Heart left ventricle (tissue), 16 donors: ENCODE measurements at regions of chr1 and their contacts with region 1.

Region 1: DNA sequence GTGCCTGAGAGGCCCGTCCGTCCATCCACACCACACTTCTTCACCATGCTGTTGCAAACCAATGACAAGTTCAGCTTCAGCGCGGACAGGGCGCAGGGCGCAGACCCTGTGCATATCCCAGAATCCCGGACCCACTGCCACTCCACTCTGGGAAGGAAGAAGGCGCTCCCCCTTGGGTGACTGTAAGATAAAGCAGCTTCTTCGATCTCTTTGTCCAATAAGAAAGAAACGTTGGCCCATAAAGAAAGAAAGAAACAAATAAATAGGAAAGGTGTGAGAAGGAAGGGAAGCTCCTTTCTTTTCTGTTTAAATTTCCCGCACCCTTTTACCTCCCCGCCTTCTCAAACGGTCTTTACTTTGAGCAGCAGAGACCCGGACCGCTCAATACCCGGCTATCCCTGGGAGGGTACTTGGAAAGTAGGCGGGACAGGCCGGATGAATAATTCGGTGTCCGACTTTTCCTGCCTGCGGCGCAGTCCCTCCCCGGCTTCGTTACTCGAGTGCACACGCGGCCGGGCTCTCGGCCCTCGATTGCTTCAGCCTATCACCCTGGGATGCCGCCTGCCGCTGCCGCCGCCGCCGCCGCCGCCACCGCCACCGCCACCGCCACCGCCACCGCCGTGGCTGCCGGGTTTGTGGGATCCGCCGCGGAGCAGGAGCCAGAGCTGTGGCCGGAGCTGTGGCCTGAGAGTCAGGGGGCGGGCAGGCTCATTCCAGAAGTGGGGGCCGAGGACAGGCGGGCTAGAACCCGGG is 523 bp upstream of the RASAL2 start:
- DNase-seq: peak; percentile 94 to 96 (median 96)
- ATAC-seq: peak; percentile 84 to 93 (median 92)
- H3K4me3 ChIP-seq: peak overlapping the region; percentile 71 to 98 (median 92)
- H3K27ac ChIP-seq: peak overlapping the region; percentile 82 to 96 (median 94)
- H3K4me1 ChIP-seq: peaks cover 2 to 45% (median 29%) of the 10 kb centered on the region in 12 donors
- H3K27me3 ChIP-seq: peaks cover 0 to 4% (median 0%) of the 10 kb centered on the region in 9 donors
- CTCF ChIP-seq: no peak
- POLR2A ChIP-seq: peak in 1 of 2 donors; percentile 28

Region 2: GRCh38 chr1:177928194-177928593 is 165.2 kb before region 1 on chr1:
- intact Hi-C with region 1: no loop called
- DNase-seq: no peak
- ATAC-seq: no peak
- H3K4me3 ChIP-seq: no peak overlapping the region
- H3K27ac ChIP-seq: no peak overlapping the region
- H3K4me1 ChIP-seq: no peaks in the 10 kb centered on the region
- H3K27me3 ChIP-seq: no peaks in the 10 kb centered on the region
- CTCF ChIP-seq: peak in 1 of 12 donors; percentile 8
- POLR2A ChIP-seq: no peak

Region 3: DNA sequence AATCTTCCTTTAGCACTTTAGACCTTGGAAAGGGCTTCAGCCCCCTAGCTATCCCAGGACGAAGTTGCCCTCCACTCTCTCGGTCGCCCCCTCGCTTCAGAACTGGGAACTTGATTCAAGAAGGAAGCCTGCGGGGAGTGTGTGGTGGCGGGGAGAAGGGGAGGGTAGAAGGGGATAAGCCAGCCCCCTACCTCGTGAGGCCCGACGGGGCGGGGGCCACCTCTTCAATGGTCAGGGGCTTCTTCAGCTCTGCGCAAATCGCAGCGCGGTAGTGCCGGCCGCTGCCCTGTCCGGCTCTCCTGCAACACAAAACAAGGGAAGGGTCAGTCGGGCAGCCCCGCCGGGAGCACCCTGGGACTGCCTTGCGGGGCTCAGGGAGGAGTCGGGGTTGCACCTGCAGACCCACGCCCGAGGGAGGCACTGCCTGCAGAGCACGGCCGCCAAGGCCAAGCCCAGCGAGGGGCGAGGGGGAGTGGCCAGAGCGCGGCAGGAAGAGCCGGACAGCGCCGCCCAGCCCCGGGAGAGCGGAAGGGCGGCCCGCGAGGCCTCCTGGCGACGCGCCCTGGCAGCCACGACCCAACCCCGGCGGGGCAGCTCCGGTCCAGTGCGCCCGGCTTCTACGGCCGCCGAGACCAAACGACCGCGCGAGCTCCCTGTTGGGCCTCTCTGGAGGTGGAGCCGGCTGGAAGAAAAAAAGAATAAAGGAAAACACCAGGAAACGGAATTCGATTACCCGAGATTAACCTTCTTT is 55.7 kb before region 1 on chr1:
- intact Hi-C with region 1: loop called in 8 of 10 experiments (anchors 1 to 10 kb)
- DNase-seq: peak; percentile 91 to 95 (median 94)
- ATAC-seq: peak; percentile 89 to 99 (median 98)
- H3K4me3 ChIP-seq: peak overlapping the region; percentile 61 to 97 (median 78)
- H3K27ac ChIP-seq: peak overlapping the region; percentile 61 to 94 (median 86)
- H3K4me1 ChIP-seq: peaks cover 0 to 45% (median 9%) of the 10 kb centered on the region in 12 donors
- H3K27me3 ChIP-seq: no peaks in the 10 kb centered on the region
- CTCF ChIP-seq: peak; percentile 20 to 71 (median 56)
- POLR2A ChIP-seq: peak in 1 of 2 donors; percentile 66

Region 4: DNA sequence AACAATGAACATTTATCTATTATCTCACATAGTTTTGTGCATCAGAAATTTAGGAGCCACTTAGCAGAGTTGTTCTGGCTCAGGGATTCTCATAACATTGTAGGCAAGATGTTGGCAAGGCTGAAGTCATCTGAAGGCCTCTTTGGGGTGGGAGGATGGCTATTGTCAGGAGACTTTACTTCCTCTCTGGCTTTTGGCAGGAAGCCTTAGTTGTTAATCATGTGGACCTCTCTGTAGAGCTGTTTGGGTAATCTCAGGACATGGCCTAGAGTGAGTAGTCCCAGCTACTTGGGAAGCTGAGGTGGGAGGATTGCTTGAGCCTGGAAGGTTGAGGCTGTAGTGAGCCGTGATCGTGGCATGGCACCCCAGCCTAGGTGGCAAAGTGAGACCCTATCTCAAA is 40.7 kb after region 1 on chr1:
- intact Hi-C with region 1: loop called in 2 of 10 experiments (anchors 5 kb)
- DNase-seq: peak in 3 of 5 donors; percentile 36 to 64 (median 56)
- ATAC-seq: peak; percentile 50 to 97 (median 94)
- H3K4me3 ChIP-seq: no peak overlapping the region
- H3K27ac ChIP-seq: peak overlapping the region in 8 of 12 donors; percentile 9 to 80 (median 45)
- H3K4me1 ChIP-seq: peaks cover 3 to 50% (median 31%) of the 10 kb centered on the region in 12 donors
- H3K27me3 ChIP-seq: no peaks in the 10 kb centered on the region
- CTCF ChIP-seq: no peak
- POLR2A ChIP-seq: no peak

Region 5: DNA sequence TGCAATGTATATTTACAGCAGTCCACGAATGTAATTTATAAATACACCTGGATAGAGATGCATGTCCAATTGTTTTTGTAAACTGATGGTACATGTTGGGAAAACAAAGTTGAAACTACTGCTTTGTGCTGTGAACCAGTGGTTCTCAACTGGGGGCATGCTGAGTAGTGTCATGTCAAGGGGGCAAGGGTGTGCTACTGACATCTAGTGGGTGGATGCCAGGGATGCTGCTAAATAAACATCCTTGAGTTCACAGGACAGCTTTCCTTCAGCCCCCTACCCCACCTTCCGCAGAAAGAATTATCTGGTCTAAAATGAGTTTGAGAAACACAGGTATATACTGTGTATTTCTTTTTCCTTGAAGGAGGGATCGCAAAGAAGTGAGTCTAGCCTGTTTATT is 96.4 kb after region 1 on chr1:
- intact Hi-C with region 1: loop called in 4 of 10 experiments (anchors 5 to 10 kb)
- DNase-seq: peak in 3 of 5 donors; percentile 36 to 38 (median 36)
- ATAC-seq: peak in 3 of 4 donors; percentile 78 to 79 (median 78)
- H3K4me3 ChIP-seq: no peak overlapping the region
- H3K27ac ChIP-seq: no peak overlapping the region
- H3K4me1 ChIP-seq: peaks cover 0 to 52% (median 17%) of the 10 kb centered on the region in 12 donors
- H3K27me3 ChIP-seq: no peaks in the 10 kb centered on the region
- CTCF ChIP-seq: peak; percentile 40 to 74 (median 56)
- POLR2A ChIP-seq: no peak

Region 6: GRCh38 chr1:178282949-178283367 is 189.6 kb after region 1 on chr1:
- intact Hi-C with region 1: loop called in 1 of 10 experiments (anchors 5 kb)
- DNase-seq: no peak
- ATAC-seq: peak in 1 of 4 donors; percentile 50
- H3K4me3 ChIP-seq: no peak overlapping the region
- H3K27ac ChIP-seq: no peak overlapping the region
- H3K4me1 ChIP-seq: peaks cover 0 to 54% (median 26%) of the 10 kb centered on the region in 12 donors
- H3K27me3 ChIP-seq: no peaks in the 10 kb centered on the region
- CTCF ChIP-seq: peak in 11 of 12 donors; percentile 23 to 65 (median 50)
- POLR2A ChIP-seq: no peak